ENCODE measurements at regions of chr20 and their contacts with region 1.

Region 1: DNA sequence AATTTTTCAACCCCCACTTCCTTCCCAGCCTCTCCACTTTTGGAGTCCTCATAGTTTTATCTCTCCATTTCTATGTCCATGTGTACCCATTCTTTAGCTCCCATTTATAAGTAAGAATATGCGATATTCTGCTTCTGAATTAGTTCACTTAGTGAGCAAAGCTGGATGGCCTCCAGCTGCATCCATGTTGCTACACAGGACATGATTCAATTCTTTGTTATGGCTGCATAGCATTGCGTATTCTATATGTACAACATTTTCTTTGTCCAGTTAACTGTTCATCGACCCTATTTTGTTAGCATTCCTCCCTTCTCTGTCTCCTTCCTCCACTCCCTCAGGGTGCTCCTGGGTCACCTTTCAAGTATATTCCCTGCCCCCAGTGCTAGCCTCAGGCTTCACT is 210.0 kb upstream of the SSTR4 start:
- DNase-seq: peak; percentile 77
- H3K4me3 Mint-ChIP-seq: no peak overlapping the region
- H3K27ac Mint-ChIP-seq: peak overlapping the region; percentile 68
- H3K4me1 Mint-ChIP-seq: peaks cover 28% of the 10 kb centered on the region
- H3K27me3 Mint-ChIP-seq: no peaks in the 10 kb centered on the region
- CTCF ChIP-seq: no peak

Region 2: GRCh38 chr20:22775671-22776139 is 49.4 kb before region 1 on chr20:
- CTCF ChIA-PET with region 1: no interaction called
- POLR2A ChIA-PET with region 1: interaction called, 11 read pairs
- intact Hi-C with region 1: no loop called
- DNase-seq: peak; percentile 88
- H3K4me3 Mint-ChIP-seq: peak overlapping the region; percentile 45
- H3K27ac Mint-ChIP-seq: peak overlapping the region; percentile 72
- H3K4me1 Mint-ChIP-seq: peaks cover 59% of the 10 kb centered on the region
- H3K27me3 Mint-ChIP-seq: no peaks in the 10 kb centered on the region
- CTCF ChIP-seq: no peak

Region 3: GRCh38 chr20:22807686-22808244 is 17.3 kb before region 1 on chr20:
- CTCF ChIA-PET with region 1: interaction called, 10 read pairs
- POLR2A ChIA-PET with region 1: interaction called, 6 read pairs
- intact Hi-C with region 1: no loop called
- DNase-seq: no peak
- H3K4me3 Mint-ChIP-seq: no peak overlapping the region
- H3K27ac Mint-ChIP-seq: no peak overlapping the region
- H3K4me1 Mint-ChIP-seq: peaks cover 6% of the 10 kb centered on the region
- H3K27me3 Mint-ChIP-seq: no peaks in the 10 kb centered on the region
- CTCF ChIP-seq: no peak

Region 4: DNA sequence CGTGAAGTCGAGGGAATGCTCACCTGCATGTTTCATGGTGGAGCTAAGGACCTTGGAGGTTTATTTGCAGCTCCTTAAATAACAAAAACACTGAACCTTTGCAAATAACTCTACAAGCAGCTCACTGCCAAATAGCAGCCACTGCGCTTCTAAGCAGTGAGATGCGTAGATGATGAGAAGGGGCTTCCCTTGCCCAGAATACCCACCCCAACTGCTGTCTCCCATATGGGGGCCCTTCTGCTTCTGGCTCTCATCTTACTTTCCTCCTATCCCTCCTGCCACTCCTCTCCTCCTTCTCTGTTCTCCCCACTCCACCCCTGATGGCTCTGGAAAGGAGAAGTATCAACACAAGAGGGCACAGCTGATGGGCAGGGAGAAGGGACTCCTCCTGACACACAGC is 16.8 kb after region 1 on chr20:
- CTCF ChIA-PET with region 1: interaction called, 11 read pairs
- POLR2A ChIA-PET with region 1: interaction called, 5 read pairs
- intact Hi-C with region 1: no loop called
- DNase-seq: no peak
- H3K4me3 Mint-ChIP-seq: no peak overlapping the region
- H3K27ac Mint-ChIP-seq: no peak overlapping the region
- H3K4me1 Mint-ChIP-seq: peaks cover 2% of the 10 kb centered on the region
- H3K27me3 Mint-ChIP-seq: no peaks in the 10 kb centered on the region
- CTCF ChIP-seq: no peak

Region 5: GRCh38 chr20:22984606-22985005 is 159.5 kb after region 1 on chr20:
- CTCF ChIA-PET with region 1: no interaction called
- POLR2A ChIA-PET with region 1: no interaction called
- intact Hi-C with region 1: no loop called
- DNase-seq: no peak
- H3K4me3 Mint-ChIP-seq: no peak overlapping the region
- H3K27ac Mint-ChIP-seq: no peak overlapping the region
- H3K4me1 Mint-ChIP-seq: no peaks in the 10 kb centered on the region
- H3K27me3 Mint-ChIP-seq: peaks cover 12% of the 10 kb centered on the region
- CTCF ChIP-seq: no peak

Region 6: GRCh38 chr20:23222531-23223200 is 397.6 kb after region 1 on chr20:
- CTCF ChIA-PET with region 1: no interaction called
- POLR2A ChIA-PET with region 1: no interaction called
- intact Hi-C with region 1: no loop called
- DNase-seq: no peak
- H3K4me3 Mint-ChIP-seq: no peak overlapping the region
- H3K27ac Mint-ChIP-seq: no peak overlapping the region
- H3K4me1 Mint-ChIP-seq: peaks cover 15% of the 10 kb centered on the region
- H3K27me3 Mint-ChIP-seq: no peaks in the 10 kb centered on the region
- CTCF ChIP-seq: no peak